ENCODE measurements at regions of chr6 and their contacts with region 1.

Region 1: GRCh38 chr6:25266456-25267100 is 12.6 kb upstream of the CARMIL1 start:
- DNase-seq: no peak
- ATAC-seq: no peak
- H3K4me3 Mint-ChIP-seq: no peak overlapping the region
- H3K27ac Mint-ChIP-seq: no peak overlapping the region
- H3K4me1 Mint-ChIP-seq: peaks cover 2 to 6% (median 3%) of the 10 kb centered on the region in 4 donors
- H3K27me3 Mint-ChIP-seq: peaks cover 0 to 5% (median 1%) of the 10 kb centered on the region in 5 donors

Region 2: DNA sequence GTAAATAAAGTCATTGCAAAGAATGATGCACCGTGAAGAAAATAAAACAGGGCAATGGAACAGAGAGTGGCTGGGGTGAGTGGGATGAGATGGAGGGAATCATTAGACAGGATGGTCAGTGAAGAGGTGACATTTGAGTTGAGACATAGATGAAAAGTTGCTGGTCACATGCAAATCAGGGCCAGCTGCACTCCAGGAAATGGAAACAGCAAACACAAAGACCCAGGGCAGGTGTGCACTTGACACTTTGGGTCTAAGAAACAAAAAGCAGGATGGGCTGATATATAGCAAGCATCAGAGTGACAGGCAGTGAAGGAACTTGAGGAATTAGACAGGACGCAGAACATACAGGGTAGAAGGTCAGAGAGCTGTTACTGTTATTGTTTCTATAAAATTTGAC is 159.4 kb before region 1 on chr6:
- POLR2A ChIA-PET with region 1: no interaction called
- DNase-seq: no peak
- ATAC-seq: no peak
- H3K4me3 Mint-ChIP-seq: no peak overlapping the region
- H3K27ac Mint-ChIP-seq: peak overlapping the region in 1 of 10 donors; percentile 35
- H3K4me1 Mint-ChIP-seq: peaks cover 0 to 7% (median 3%) of the 10 kb centered on the region in 4 donors
- H3K27me3 Mint-ChIP-seq: no peaks in the 10 kb centered on the region

Region 3: DNA sequence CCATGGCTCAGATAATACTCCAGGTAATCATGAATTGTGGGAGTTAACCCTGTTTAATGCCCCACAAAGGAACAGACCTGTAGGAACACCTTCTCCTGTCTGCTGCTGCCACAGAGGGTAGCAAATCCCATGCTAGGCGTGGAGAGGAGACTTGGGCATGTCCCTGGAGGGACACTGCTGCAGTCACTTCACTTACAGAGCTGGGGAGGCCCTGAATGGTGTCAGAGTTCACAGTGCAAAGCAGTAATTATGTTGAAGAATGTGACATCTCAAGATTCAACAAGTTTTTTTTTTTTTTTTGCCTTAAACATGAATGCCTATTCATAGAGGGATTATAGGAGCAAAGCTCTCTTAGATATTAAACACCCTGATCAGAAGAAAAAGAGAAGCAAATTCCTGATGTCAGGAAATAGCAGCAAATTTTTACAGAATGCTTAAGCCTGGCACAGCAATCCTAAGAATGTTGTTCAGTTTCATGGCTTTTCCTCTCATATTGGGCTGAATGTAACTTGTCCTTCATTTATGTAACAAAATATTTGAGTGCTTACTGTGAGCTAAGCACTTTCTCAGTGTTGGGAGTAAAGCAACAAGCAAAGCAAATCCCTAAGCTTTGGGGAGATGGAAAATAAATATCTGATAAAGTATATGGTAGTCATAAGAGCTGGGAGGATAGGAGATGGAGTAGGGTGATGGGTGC is 57.6 kb after region 1 on chr6:
- POLR2A ChIA-PET with region 1: no interaction called
- DNase-seq: no peak
- ATAC-seq: no peak
- H3K4me3 Mint-ChIP-seq: no peak overlapping the region
- H3K27ac Mint-ChIP-seq: peak overlapping the region in 1 of 10 donors; percentile 46
- H3K4me1 Mint-ChIP-seq: peaks cover 0 to 16% (median 6%) of the 10 kb centered on the region in 4 donors
- H3K27me3 Mint-ChIP-seq: no peaks in the 10 kb centered on the region

Region 4: GRCh38 chr6:25389471-25389870 is 122.9 kb after region 1 on chr6:
- POLR2A ChIA-PET with region 1: no interaction called
- DNase-seq: no peak
- ATAC-seq: no peak
- H3K4me3 Mint-ChIP-seq: no peak overlapping the region
- H3K27ac Mint-ChIP-seq: peak overlapping the region in 2 of 10 donors; percentile 64 to 79
- H3K4me1 Mint-ChIP-seq: peaks cover 16 to 34% (median 25%) of the 10 kb centered on the region in 4 donors
- H3K27me3 Mint-ChIP-seq: no peaks in the 10 kb centered on the region

Region 5: GRCh38 chr6:25490018-25490801 is 223.6 kb after region 1 on chr6:
- POLR2A ChIA-PET with region 1: interaction called, 10 read pairs
- DNase-seq: peak; percentile 37 to 84 (median 65)
- ATAC-seq: peak; percentile 78 to 96
- H3K4me3 Mint-ChIP-seq: no peak overlapping the region
- H3K27ac Mint-ChIP-seq: peak overlapping the region in 6 of 10 donors; percentile 22 to 89 (median 58)
- H3K4me1 Mint-ChIP-seq: peaks cover 6 to 9% (median 8%) of the 10 kb centered on the region in 4 donors
- H3K27me3 Mint-ChIP-seq: no peaks in the 10 kb centered on the region